ENCODE measurements at regions of chr1 and their contacts with region 1.

Region 1: GRCh38 chr1:150010393-150011115 is at the start of gene OTUD7B:
- DNase-seq: peak; percentile 93
- H3K4me3 ChIP-seq: peak within 1 kb of the TSS; percentile 64 to 99 (median 88)
- H3K27ac ChIP-seq: peak within 1 kb of the TSS; percentile 86 to 98 (median 96)
- H3K4me1 ChIP-seq: peaks cover 34 to 45% (median 39%) of the 10 kb centered on the region in 4 donors
- H3K27me3 ChIP-seq: no peaks in the 10 kb centered on the region
- CTCF ChIP-seq: peak in 1 of 3 experiments; percentile 37
- EP300 ChIP-seq: no peak
- POLR2A ChIP-seq: peak; percentile 54
- total RNA-seq, gene OTUD7B: 23.7 to 41.1 (median 30.4) TPM

Region 2: GRCh38 chr1:150061632-150062101 is 51.1 kb after region 1 on chr1:
- intact Hi-C with region 1: loop called (anchors 5 kb)
- DNase-seq: no peak
- H3K4me3 ChIP-seq: no peak overlapping the region
- H3K27ac ChIP-seq: peak overlapping the region; percentile 64 to 78 (median 75)
- H3K4me1 ChIP-seq: peaks cover 17 to 51% (median 46%) of the 10 kb centered on the region in 4 donors
- H3K27me3 ChIP-seq: no peaks in the 10 kb centered on the region
- CTCF ChIP-seq: no peak
- EP300 ChIP-seq: no peak
- POLR2A ChIP-seq: no peak

Measured in esophagus muscularis mucosa (tissue), 4 donors.